ENCODE measurements at regions of chr19 and their contacts with region 1.

Region 1: GRCh38 chr19:10695401-10696398 is 5.5 kb upstream of the QTRT1 start:
- DNase-seq: peak; percentile 95
- CTCF ChIP-seq: no peak

Region 2: GRCh38 chr19:10478903-10479384 is 216.8 kb before region 1 on chr19:
- CTCF ChIA-PET with region 1: interaction called, 10 read pairs
- POLR2A ChIA-PET with region 1: no interaction called
- DNase-seq: peak; percentile 58
- CTCF ChIP-seq: peak; percentile 9

Region 3: DNA sequence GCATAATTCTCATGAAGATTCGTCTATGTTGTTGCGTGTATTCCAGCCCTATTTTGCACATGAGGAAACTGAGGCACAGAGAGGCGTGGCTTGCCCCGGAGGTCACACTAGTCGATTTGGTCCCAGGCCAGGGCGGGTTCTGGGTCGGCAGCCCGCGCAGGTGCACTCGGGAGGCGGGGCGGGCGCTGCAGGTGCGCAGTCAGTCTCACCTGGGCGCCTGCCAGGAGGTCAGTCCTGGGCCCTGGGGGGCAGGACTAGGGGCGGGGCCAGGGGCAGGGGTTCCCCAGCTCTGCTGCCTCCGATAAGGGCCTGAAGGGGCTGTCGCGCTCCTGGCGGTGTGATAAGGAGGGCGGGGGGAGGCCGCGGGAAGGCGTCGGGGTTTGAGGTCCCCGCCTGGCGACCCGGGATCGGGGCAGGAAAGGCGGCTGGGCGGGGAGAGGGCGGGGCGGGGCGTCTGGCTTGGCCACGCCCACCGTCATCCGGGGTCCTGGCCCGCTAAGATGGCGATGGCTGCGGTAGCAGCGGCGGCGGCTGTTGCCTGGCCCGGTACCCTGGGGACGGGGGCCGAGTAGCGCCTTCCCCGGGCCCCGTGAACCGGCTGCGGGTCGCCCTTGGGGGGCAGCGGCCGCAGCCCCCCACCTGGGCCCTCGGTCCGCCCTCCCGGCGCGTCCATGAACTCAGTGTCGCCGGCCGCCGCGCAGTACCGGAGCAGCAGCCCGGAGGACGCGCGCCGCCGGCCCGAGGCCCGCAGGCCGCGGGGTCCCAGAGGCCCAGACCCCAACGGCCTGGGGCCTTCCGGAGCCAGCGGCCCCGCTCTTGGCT is 152.1 kb before region 1 on chr19 and contains the start of gene ATG4D:
- CTCF ChIA-PET with region 1: interaction called, 10 read pairs
- POLR2A ChIA-PET with region 1: no interaction called
- DNase-seq: peak; percentile 97
- CTCF ChIP-seq: no peak

Region 4: GRCh38 chr19:10586396-10586795 is 109.3 kb before region 1 on chr19:
- CTCF ChIA-PET with region 1: interaction called, 161 read pairs
- POLR2A ChIA-PET with region 1: no interaction called
- DNase-seq: no peak
- CTCF ChIP-seq: no peak

Region 5: GRCh38 chr19:10670182-10670581 is 25.5 kb before region 1 on chr19:
- CTCF ChIA-PET with region 1: interaction called, 12 read pairs
- POLR2A ChIA-PET with region 1: no interaction called
- DNase-seq: no peak
- CTCF ChIP-seq: no peak

Region 6: GRCh38 chr19:10712045-10712444 is 16.3 kb after region 1 on chr19:
- CTCF ChIA-PET with region 1: interaction called, 68 read pairs
- POLR2A ChIA-PET with region 1: no interaction called
- DNase-seq: no peak
- CTCF ChIP-seq: no peak

Region 7: GRCh38 chr19:10864538-10864899 is 168.8 kb after region 1 on chr19:
- CTCF ChIA-PET with region 1: interaction called, 11 read pairs
- POLR2A ChIA-PET with region 1: no interaction called
- DNase-seq: peak; percentile 88
- CTCF ChIP-seq: peak; percentile 93

Region 8: DNA sequence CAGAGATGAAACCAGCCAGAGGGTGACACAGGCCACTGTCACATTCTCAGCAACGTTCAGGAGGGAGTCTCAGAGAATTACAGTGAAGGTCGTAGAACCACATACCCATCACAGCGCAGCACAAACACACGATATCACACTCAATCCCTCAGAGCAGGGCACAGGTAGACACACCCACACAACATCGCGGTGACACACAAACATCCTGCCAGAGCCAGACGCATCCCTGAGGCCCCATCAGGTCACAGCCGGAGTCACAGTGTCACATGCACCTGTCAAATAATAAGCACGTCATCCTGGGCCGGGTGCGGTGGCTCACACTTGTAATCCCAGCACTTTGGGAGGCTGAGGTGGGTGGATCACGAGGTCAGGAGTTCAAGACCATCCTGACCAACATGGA is 767.7 kb after region 1 on chr19:
- CTCF ChIA-PET with region 1: no interaction called
- POLR2A ChIA-PET with region 1: no interaction called
- DNase-seq: no peak
- CTCF ChIP-seq: no peak

Measured in GM10248 (cell line).